Naive thymus-derived CD4-positive, alpha-beta T cell (primary cell): ENCODE measurements at regions of chr10 and their contacts with region 1.

Region 1: GRCh38 chr10:132307823-132308587 is at the start of gene STK32C:
- DNase-seq: peak; percentile 76 to 89 (median 87)
- ATAC-seq: peak; percentile 97
- H3K4me3 ChIP-seq: peak within 1 kb of the TSS; percentile 65
- H3K4me3 Mint-ChIP-seq: peak within 1 kb of the TSS; percentile 83 to 93 (median 86)
- H3K27ac ChIP-seq: peak within 1 kb of the TSS; percentile 73
- H3K27ac Mint-ChIP-seq: peak within 1 kb of the TSS in 6 of 9 donors; percentile 17 to 77 (median 56)
- H3K4me1 ChIP-seq: peaks cover 4 to 6% of the 10 kb centered on the region in 2 donors
- H3K4me1 Mint-ChIP-seq: peaks cover 0 to 20% (median 12%) of the 10 kb centered on the region in 7 donors
- H3K27me3 ChIP-seq: no peaks in the 10 kb centered on the region
- H3K27me3 Mint-ChIP-seq: peaks cover 0 to 46% (median 0%) of the 10 kb centered on the region in 5 donors
- total RNA-seq, gene STK32C: 8.7 to 19.4 (median 12.0) TPM

Region 2: DNA sequence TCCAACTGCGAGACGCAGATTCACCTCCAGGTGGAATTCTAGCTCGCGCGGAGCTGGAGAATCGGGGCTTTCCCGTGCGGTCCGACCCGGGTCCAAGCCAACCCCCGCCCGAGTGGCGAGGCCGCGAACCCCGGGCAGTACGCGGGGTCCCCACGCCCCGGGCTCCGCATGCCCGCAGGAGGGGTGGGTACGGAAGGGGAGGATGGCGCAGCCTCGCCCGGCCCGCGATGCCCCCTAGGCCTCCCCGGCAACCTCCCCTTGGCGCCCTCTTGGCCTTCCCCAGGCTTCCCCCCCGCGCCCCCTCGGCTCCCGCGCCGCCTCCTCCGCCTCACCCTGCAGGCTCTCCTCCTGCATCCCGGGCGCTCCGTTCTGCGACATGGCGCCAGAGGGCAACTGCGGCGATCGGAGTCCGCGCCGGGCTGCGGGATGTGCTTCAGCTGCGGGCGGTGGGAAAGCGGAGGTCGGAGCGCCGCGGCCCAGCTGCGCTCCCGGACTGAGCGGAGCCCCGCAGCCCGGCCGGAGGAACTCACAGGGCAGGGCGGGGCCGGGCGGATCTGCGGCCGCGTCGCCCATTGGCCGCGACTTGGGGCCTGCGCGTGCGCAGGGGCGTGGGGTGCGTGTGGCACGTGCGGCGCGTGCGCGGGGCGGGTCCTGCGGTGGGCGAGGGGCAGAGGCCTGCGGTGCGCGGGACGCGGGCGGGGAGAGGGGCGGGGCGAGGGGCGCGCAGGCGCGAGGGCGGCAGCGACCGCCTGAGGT is 326.4 kb before region 1 on chr10 and contains the start of gene BNIP3:
- CTCF ChIA-PET with region 1: no interaction called
- POLR2A ChIA-PET with region 1: no interaction called
- intact Hi-C with region 1: loop called in 1 of 2 experiments (anchors 1 kb)
- DNase-seq: peak; percentile 92 to 99 (median 93)
- ATAC-seq: peak; percentile 96
- H3K4me3 ChIP-seq: peak within 1 kb of the TSS; percentile 79
- H3K4me3 Mint-ChIP-seq: peak within 1 kb of the TSS; percentile 81 to 93 (median 88)
- H3K27ac ChIP-seq: peak within 1 kb of the TSS; percentile 79
- H3K27ac Mint-ChIP-seq: peak within 1 kb of the TSS; percentile 66 to 89 (median 84)
- H3K4me1 ChIP-seq: peaks cover 7 to 22% of the 10 kb centered on the region in 2 donors
- H3K4me1 Mint-ChIP-seq: peaks cover 23 to 49% (median 42%) of the 10 kb centered on the region in 7 donors
- H3K27me3 ChIP-seq: no peaks in the 10 kb centered on the region
- H3K27me3 Mint-ChIP-seq: peaks cover 0 to 18% (median 0%) of the 10 kb centered on the region in 5 donors
- total RNA-seq, gene BNIP3: 17.7 to 81.7 (median 39.3) TPM

Region 3: DNA sequence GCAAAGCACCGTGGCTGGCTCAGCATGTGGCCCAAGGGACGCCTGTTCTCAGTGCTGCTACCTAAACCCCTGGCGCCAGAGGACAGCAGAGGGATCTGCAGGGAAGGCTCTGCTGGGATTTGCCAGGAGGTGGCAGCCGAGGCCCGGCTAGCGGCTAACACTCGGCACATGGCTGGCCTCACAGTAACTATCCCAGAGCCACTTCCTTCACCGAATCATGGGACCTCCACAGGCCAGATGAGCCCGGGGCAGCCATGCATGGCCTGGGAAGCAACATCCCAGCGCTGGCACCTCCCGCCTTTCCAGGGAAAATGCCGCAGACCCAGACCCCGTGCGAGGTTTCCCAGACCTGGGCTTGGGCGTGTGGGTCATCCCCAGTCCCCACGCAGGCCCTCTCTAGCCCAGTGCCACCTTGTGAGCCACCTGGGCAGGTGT is 84.8 kb before region 1 on chr10:
- CTCF ChIA-PET with region 1: no interaction called
- POLR2A ChIA-PET with region 1: no interaction called
- intact Hi-C with region 1: loop called in 1 of 2 experiments (anchors 2 kb)
- DNase-seq: peak; percentile 40 to 73 (median 60)
- ATAC-seq: peak; percentile 96
- H3K4me3 ChIP-seq: no peak overlapping the region
- H3K4me3 Mint-ChIP-seq: no peak overlapping the region
- H3K27ac ChIP-seq: no peak overlapping the region
- H3K27ac Mint-ChIP-seq: no peak overlapping the region
- H3K4me1 ChIP-seq: peaks cover 0 to 6% of the 10 kb centered on the region in 2 donors
- H3K4me1 Mint-ChIP-seq: peaks cover 0 to 8% (median 5%) of the 10 kb centered on the region in 7 donors
- H3K27me3 ChIP-seq: no peaks in the 10 kb centered on the region
- H3K27me3 Mint-ChIP-seq: no peaks in the 10 kb centered on the region

Region 4: DNA sequence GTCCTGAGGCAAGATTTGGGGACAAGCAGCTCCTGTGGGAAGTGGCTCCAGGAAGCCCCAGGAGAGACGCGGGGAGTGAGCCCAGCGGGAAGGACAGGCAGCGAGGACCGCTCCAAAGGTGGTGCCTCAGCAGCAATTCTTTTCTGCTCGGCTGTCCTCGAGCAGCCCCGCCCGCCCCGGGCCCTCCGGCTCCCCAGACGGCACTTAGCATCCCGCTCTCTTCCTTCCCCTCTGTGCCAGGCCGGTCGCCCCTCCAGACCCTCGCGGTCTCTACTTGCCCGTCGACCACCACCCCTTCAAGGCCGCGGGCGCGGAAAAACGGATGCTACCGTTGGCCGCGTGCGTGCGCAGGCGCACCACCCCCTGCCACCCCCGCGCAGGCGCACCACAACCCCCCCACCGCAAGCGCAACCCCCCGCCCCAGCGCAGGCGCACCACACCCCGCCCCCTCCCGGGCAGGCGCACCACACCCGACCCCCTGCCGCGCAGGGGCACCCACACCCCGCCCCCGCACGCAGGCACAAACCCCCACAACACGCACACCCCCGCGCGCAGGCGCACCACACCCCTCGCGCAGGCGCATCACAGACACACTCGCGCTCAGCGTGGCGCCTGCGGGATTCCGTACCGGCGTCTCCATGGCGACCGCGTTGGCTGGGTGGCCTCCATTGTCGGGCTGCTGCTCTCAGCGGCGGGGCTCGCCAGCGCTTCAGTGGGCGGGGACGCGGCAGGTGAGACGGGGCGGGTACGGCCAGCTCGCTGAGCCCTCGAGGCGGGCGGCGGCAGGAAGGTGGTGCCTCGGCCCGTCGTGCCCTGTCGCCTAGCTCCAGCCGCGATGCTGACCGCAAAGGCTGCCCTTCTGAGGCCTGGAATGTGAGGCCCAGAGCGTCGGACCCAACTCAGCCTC is 23.8 kb after region 1 on chr10 and contains the start of gene LRRC27:
- CTCF ChIA-PET with region 1: no interaction called
- POLR2A ChIA-PET with region 1: no interaction called
- intact Hi-C with region 1: loop called (anchors 1 kb)
- DNase-seq: peak; percentile 99 to 100 (median 100)
- ATAC-seq: peak; percentile 93
- H3K4me3 ChIP-seq: peak within 1 kb of the TSS; percentile 96
- H3K4me3 Mint-ChIP-seq: peak within 1 kb of the TSS; percentile 86 to 96 (median 90)
- H3K27ac ChIP-seq: peak within 1 kb of the TSS; percentile 84
- H3K27ac Mint-ChIP-seq: peak within 1 kb of the TSS; percentile 86 to 97 (median 95)
- H3K4me1 ChIP-seq: peaks cover 11 to 24% of the 10 kb centered on the region in 2 donors
- H3K4me1 Mint-ChIP-seq: peaks cover 45 to 77% (median 66%) of the 10 kb centered on the region in 7 donors
- H3K27me3 ChIP-seq: no peaks in the 10 kb centered on the region
- H3K27me3 Mint-ChIP-seq: peaks cover 0 to 7% (median 0%) of the 10 kb centered on the region in 5 donors
- total RNA-seq, gene LRRC27: 3.4 to 10.8 (median 7.1) TPM

Region 5: GRCh38 chr10:132407814-132408278 is 99.8 kb after region 1 on chr10:
- CTCF ChIA-PET with region 1: no interaction called
- POLR2A ChIA-PET with region 1: no interaction called
- intact Hi-C with region 1: no loop called
- DNase-seq: no peak
- ATAC-seq: peak; percentile 53
- H3K4me3 ChIP-seq: no peak overlapping the region
- H3K4me3 Mint-ChIP-seq: peak overlapping the region in 9 of 10 donors; percentile 23 to 72 (median 58)
- H3K27ac ChIP-seq: no peak overlapping the region
- H3K27ac Mint-ChIP-seq: peak overlapping the region in 7 of 9 donors; percentile 31 to 84 (median 62)
- H3K4me1 ChIP-seq: peaks cover 0 to 15% of the 10 kb centered on the region in 2 donors
- H3K4me1 Mint-ChIP-seq: peaks cover 3 to 37% (median 20%) of the 10 kb centered on the region in 7 donors
- H3K27me3 ChIP-seq: no peaks in the 10 kb centered on the region
- H3K27me3 Mint-ChIP-seq: no peaks in the 10 kb centered on the region

Region 6: GRCh38 chr10:132434405-132435005 is 126.5 kb after region 1 on chr10:
- CTCF ChIA-PET with region 1: no interaction called
- POLR2A ChIA-PET with region 1: no interaction called
- intact Hi-C with region 1: no loop called
- DNase-seq: peak in 7 of 9 donors; percentile 38 to 61 (median 50)
- ATAC-seq: peak; percentile 67
- H3K4me3 ChIP-seq: no peak overlapping the region
- H3K4me3 Mint-ChIP-seq: peak overlapping the region; percentile 5 to 79 (median 60)
- H3K27ac ChIP-seq: peak overlapping the region; percentile 10
- H3K27ac Mint-ChIP-seq: peak overlapping the region in 5 of 9 donors; percentile 57 to 79 (median 67)
- H3K4me1 ChIP-seq: peaks cover 0 to 4% of the 10 kb centered on the region in 2 donors
- H3K4me1 Mint-ChIP-seq: peaks cover 5 to 14% (median 8%) of the 10 kb centered on the region in 7 donors
- H3K27me3 ChIP-seq: no peaks in the 10 kb centered on the region
- H3K27me3 Mint-ChIP-seq: no peaks in the 10 kb centered on the region

Region 7: GRCh38 chr10:132446661-132447194 is 138.7 kb after region 1 on chr10:
- CTCF ChIA-PET with region 1: no interaction called
- POLR2A ChIA-PET with region 1: no interaction called
- intact Hi-C with region 1: loop called (anchors 1 kb)
- DNase-seq: peak in 8 of 9 donors; percentile 58 to 75 (median 70)
- ATAC-seq: peak; percentile 44
- H3K4me3 ChIP-seq: peak overlapping the region; percentile 60
- H3K4me3 Mint-ChIP-seq: peak overlapping the region; percentile 50 to 89 (median 78)
- H3K27ac ChIP-seq: peak overlapping the region; percentile 98
- H3K27ac Mint-ChIP-seq: peak overlapping the region; percentile 96 to 100 (median 98)
- H3K4me1 ChIP-seq: peaks cover 21 to 50% of the 10 kb centered on the region in 2 donors
- H3K4me1 Mint-ChIP-seq: peaks cover 25 to 64% (median 42%) of the 10 kb centered on the region in 7 donors
- H3K27me3 ChIP-seq: no peaks in the 10 kb centered on the region
- H3K27me3 Mint-ChIP-seq: no peaks in the 10 kb centered on the region

Region 8: GRCh38 chr10:133357285-133358151 is 1049.5 kb after region 1 on chr10 and contains the start of gene FUOM:
- CTCF ChIA-PET with region 1: no interaction called
- POLR2A ChIA-PET with region 1: no interaction called
- intact Hi-C with region 1: loop called in 1 of 2 experiments (anchors 5 kb)
- DNase-seq: peak; percentile 60 to 88 (median 74)
- ATAC-seq: peak; percentile 95
- H3K4me3 ChIP-seq: peak within 1 kb of the TSS; percentile 61
- H3K4me3 Mint-ChIP-seq: peak within 1 kb of the TSS; percentile 62 to 85 (median 79)
- H3K27ac ChIP-seq: peak within 1 kb of the TSS; percentile 76
- H3K27ac Mint-ChIP-seq: peak within 1 kb of the TSS in 7 of 9 donors; percentile 23 to 72 (median 59)
- H3K4me1 ChIP-seq: no peaks in the 10 kb centered on the region
- H3K4me1 Mint-ChIP-seq: peaks cover 0 to 6% (median 4%) of the 10 kb centered on the region in 7 donors
- H3K27me3 ChIP-seq: no peaks in the 10 kb centered on the region
- H3K27me3 Mint-ChIP-seq: no peaks in the 10 kb centered on the region
- total RNA-seq, gene FUOM: 11.2 to 24.6 (median 16.9) TPM